ENCODE measurements at regions of chrX and their contacts with region 1.

Region 1: DNA sequence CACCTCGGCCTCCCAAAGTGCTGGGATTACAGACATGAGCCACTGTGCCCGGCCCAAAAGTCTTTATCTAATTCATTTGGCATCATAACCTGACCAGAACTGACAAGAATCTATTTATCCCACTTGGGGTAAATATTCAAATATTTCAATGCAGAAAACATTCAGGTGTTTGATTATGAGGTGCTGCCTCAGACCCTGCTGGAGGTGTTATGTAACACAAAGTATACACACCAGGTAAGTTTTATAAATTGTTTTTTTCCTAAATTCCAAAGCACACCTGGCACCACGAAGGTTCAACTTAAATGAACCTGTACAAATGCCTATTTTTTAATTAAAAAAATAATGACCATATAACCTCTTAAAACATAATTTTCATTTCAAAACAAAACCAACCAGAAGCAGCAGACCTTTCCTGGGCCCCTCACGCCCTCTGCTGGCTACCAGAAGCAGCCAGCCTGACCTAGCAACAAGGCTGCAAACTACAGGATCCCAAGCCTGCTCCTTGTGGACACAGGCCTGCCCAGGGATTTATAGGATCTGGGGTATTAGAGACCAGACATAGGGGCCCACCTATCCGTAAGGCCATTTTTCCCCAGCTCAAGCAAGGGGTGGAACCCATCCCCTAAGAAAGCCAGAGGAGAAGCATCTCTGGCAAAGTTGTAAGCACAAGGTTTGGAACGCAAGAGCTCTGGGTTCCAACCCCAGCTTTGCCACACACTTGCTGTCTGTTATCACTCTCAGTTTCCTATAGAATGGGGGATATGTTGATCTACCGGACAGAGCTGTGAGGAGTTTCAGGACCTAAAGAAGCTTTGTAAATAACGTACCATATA is 11.7 kb downstream of the OTUD5 start:
- DNase-seq: peak; percentile 40
- ATAC-seq: peak; percentile 80
- H3K4me3 ChIP-seq: no peak overlapping the region
- H3K27ac ChIP-seq: no peak overlapping the region
- H3K4me1 ChIP-seq: peaks cover 25% of the 10 kb centered on the region
- H3K27me3 ChIP-seq: no peaks in the 10 kb centered on the region
- CTCF ChIP-seq: peak; percentile 71
- EP300 ChIP-seq: no peak
- POLR2A ChIP-seq: no peak
- RAD21 ChIP-seq: 0 out of 2 replicates have a peak, but pooled peaks have one; percentile 32

Region 2: GRCh38 chrX:48761674-48762471 is 183.9 kb before region 1 on chrX and contains the start of gene GLOD5:
- CTCF ChIA-PET with region 1: no interaction called
- POLR2A ChIA-PET with region 1: no interaction called
- in situ Hi-C with region 1: no loop called
- intact Hi-C with region 1: loop called (anchors 5 kb)
- DNase-seq: peak; percentile 45
- ATAC-seq: peak; percentile 99
- H3K4me3 ChIP-seq: peak within 1 kb of the TSS; percentile 35 to 62 (median 59); a peak in 4 of 6 replicates
- H3K27ac ChIP-seq: no peak within 1 kb of the TSS
- H3K4me1 ChIP-seq: peaks cover 7% of the 10 kb centered on the region; the same call in 1 of the 2 replicates
- H3K27me3 ChIP-seq: no peaks in the 10 kb centered on the region
- CTCF ChIP-seq: peak; percentile 86
- EP300 ChIP-seq: no peak
- POLR2A ChIP-seq: no peak
- RAD21 ChIP-seq: peak; percentile 74
- total RNA-seq, gene GLOD5: 0.73 and 0.93 TPM in 2 replicates

Region 3: GRCh38 chrX:48927736-48928382 is 17.9 kb before region 1 on chrX:
- CTCF ChIA-PET with region 1: no interaction called
- POLR2A ChIA-PET with region 1: no interaction called
- in situ Hi-C with region 1: no loop called
- intact Hi-C with region 1: loop called (anchors 1 kb)
- DNase-seq: no peak
- ATAC-seq: no peak
- H3K4me3 ChIP-seq: no peak overlapping the region
- H3K27ac ChIP-seq: no peak overlapping the region
- H3K4me1 ChIP-seq: no peaks in the 10 kb centered on the region
- H3K27me3 ChIP-seq: no peaks in the 10 kb centered on the region
- CTCF ChIP-seq: no peak
- EP300 ChIP-seq: no peak
- POLR2A ChIP-seq: no peak
- RAD21 ChIP-seq: no peak

Region 4: DNA sequence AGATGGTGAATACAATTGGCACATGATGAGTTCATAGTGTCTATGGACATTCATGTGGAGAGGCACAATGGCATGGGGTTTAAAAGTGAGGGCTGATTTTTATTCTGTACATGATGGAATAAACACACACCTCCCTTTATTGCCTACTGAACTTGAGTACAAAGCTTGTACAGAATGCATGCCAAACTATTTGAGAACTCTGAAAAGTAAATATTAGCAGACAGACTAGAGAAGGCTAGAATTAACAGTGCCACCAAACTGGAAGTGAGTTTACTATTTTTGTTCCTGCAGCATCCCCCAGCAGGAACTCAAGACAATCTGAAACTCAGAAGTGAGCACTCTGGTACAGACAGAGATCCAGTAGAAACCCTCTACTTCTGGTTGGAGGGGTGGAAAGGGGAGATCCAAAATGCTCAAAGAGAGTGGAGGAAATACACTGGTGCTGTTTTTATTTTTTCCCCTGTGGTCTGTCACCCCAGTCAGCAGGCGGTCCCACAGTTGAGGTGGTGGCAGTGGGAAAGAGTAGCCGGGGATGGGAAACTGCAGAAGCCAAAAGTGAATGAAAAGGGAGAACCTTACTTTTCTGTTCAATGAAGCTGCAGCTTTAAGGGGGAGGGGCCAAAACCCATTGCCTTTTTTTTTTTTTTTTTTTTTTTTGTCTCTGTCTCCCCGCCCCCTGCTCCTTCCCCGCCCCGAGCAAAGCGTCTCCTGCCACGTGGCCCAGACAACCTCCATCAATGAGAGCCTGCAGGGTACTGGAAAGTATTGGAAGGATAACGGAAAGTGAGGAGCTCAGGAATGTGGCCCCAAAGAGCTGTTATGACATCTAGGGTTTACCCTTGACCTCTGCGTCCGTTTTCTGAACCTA is 1234.6 kb after region 1 on chrX:
- CTCF ChIA-PET with region 1: no interaction called
- POLR2A ChIA-PET with region 1: no interaction called
- in situ Hi-C with region 1: no loop called
- intact Hi-C with region 1: no loop called
- DNase-seq: peak; percentile 66
- ATAC-seq: peak; percentile 90
- H3K4me3 ChIP-seq: peak overlapping the region in 2 of 3 experiments; percentile 15 to 23; a peak in 3 of 6 replicates
- H3K27ac ChIP-seq: peak overlapping the region; percentile 69
- H3K4me1 ChIP-seq: peaks cover 29% of the 10 kb centered on the region
- H3K27me3 ChIP-seq: no peaks in the 10 kb centered on the region
- CTCF ChIP-seq: no peak
- EP300 ChIP-seq: no peak
- POLR2A ChIP-seq: no peak
- RAD21 ChIP-seq: no peak

Measured in HepG2 (cell line).